ENCODE measurements at regions of chr5 and their contacts with region 1.

Region 1: DNA sequence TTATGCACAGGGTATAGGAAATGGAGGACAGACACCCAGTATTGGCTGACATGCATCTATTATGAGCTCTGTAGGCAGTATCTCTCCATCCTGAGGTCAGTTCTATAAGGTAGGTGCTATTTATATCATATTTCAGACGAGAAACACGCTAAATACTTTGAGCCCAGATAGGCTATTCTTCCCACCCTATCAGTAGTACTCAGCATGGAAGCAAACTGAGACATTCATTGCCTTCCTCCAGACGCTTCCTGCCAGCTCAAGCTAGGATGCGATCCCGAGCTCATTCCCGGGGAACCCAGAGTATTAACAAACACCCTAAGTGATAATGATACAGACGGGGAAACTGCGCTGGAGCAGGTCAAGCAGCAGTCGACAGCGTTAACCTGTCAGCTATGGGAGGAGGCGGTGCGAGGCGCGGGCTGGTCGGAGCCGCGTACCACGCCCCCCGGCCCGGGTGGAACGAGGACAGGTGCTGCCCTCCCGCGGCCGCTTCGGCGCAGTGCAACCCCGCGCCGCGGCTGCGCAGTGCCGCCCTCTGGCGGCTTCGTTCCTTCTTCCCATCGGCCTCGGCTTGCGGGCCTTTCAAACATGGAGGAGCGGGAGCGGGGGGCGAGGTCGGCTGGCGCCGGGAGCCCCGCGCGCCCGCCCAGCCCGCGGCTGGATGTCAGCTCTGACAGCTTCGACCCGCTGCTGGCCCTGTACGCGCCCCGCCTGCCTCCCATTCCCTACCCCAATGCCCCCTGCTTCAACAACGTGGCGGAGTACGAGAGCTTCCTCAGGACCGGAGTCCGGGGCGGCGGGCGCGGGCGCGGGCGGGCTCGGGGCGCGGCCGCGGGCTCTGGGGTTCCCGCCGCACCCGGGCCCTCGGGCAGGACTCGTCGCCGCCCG is at the start of gene LSM11:
- DNase-seq: peak; percentile 84
- H3K4me3 ChIP-seq: peak within 1 kb of the TSS; percentile 68 to 87 (median 80)
- H3K27ac ChIP-seq: peak within 1 kb of the TSS; percentile 51
- H3K4me1 ChIP-seq: peaks cover 11% of the 10 kb centered on the region
- H3K27me3 ChIP-seq: no peaks in the 10 kb centered on the region
- CTCF ChIP-seq: peak; percentile 92 to 99
- total RNA-seq, gene LSM11: 2.6 to 4.3 TPM

Region 2: GRCh38 chr5:157142317-157143126 is 600.9 kb before region 1 on chr5 and contains the start of gene MED7:
- CTCF ChIA-PET with region 1: no interaction called
- dilution Hi-C with region 1: no loop called
- in situ Hi-C with region 1: no loop called
- intact Hi-C with region 1: loop called (anchors 10 kb)
- DNase-seq: peak; percentile 97
- H3K4me3 ChIP-seq: peak within 1 kb of the TSS; percentile 72 to 98 (median 95)
- H3K27ac ChIP-seq: peak within 1 kb of the TSS; percentile 82
- H3K4me1 ChIP-seq: no peaks in the 10 kb centered on the region
- H3K27me3 ChIP-seq: no peaks in the 10 kb centered on the region
- CTCF ChIP-seq: no peak
- total RNA-seq, gene MED7: 9.5 to 10.2 TPM

Region 3: DNA sequence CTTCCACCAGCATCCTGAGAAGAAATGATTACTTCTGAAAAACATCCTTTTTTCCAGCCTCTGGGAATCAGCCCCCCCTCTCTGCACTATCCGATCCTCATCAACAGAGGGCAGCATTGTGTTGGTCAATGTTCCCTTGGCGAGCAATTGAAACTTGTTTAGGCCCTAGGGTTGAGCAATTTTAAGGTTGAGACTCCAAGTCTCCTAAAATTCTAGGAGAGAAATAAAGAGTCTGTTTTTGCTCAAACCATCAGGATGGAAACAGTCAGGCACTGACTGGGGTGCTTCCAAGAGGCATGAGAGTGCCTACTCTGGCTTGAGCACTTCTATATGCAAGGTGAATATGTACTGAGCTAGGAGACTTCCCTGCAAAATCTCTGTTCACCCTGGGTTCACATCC is 489.9 kb before region 1 on chr5:
- CTCF ChIA-PET with region 1: no interaction called
- dilution Hi-C with region 1: no loop called
- in situ Hi-C with region 1: no loop called
- intact Hi-C with region 1: loop called (anchors 5 kb)
- DNase-seq: peak; percentile 29
- H3K4me3 ChIP-seq: no peak overlapping the region
- H3K27ac ChIP-seq: no peak overlapping the region
- H3K4me1 ChIP-seq: no peaks in the 10 kb centered on the region
- H3K27me3 ChIP-seq: no peaks in the 10 kb centered on the region
- CTCF ChIP-seq: peak; percentile 85 to 94

Region 4: DNA sequence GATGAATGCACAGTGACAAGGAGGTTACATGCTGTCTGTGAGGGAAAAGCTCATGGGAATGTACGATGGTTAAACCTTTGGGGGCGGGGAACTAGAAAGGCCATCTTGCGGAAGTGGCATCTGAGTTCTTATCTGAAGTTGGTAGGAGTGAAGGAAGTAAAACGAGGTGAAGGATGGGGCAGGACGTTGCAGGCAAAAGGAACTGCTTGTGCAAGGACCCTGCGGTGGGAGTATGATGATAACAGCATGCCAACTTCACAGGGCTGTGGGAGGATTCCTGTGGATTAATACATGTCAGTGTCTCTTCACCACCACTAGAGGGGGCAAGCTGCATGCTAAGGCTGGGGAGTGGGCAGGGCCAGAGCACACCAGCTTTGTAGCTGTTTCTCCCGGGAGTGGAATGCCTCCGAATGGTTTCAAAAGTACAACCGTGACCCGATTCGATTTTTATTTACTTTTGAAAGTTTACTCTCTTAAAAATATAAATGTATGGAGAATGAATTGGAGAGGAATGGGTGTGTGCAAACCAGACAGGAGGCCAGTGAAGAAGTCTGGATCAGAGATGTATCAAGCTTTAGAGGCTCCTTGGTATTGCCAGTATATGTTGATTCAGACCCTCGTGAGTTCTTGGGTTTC is 415.0 kb before region 1 on chr5:
- CTCF ChIA-PET with region 1: no interaction called
- dilution Hi-C with region 1: no loop called
- in situ Hi-C with region 1: loop called (anchors 10 to 25 kb)
- intact Hi-C with region 1: loop called (anchors 1 kb)
- DNase-seq: peak; percentile 52
- H3K4me3 ChIP-seq: peak overlapping the region in 1 of 3 experiments; percentile 34
- H3K27ac ChIP-seq: no peak overlapping the region
- H3K4me1 ChIP-seq: no peaks in the 10 kb centered on the region
- H3K27me3 ChIP-seq: no peaks in the 10 kb centered on the region
- CTCF ChIP-seq: peak; percentile 97

Region 5: DNA sequence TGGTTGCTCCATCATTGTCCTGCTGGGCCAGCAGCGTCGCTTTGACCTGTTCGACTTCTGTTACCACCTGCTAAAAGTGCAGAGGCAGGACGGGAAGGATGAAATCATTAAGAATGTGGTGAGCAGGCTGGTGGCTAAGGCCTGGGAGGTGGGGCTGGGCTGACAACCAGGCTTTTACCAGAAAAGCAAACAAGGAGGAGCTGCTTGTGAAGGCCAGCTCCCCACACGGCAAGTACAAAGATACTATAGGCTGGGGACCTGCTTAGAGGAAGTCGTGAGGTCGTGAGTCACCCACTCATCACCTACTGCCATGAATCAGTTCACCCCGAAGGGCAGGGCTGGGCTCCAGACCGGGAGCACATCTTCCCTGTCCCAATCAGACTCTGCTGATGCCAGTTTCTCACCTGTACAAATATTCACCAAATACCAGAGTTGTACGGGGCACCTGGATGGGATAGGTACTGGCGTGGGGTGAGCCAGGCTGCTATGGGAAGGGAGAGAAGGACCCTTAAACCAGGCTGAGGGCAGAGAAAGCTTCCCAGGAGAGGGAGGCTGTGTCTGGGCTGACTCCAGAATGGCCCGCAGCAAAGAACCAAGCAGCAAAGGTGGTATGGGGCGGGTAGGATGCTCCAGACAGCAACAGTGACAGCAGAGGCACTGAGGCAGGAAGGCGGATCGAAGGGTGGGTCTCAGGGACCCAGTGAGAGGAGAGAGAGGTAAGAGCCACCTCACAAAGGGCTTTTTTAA is 352.7 kb before region 1 on chr5:
- CTCF ChIA-PET with region 1: interaction called, 4 read pairs
- dilution Hi-C with region 1: no loop called
- in situ Hi-C with region 1: no loop called
- intact Hi-C with region 1: loop called (anchors 5 kb)
- DNase-seq: peak; percentile 98
- H3K4me3 ChIP-seq: no peak overlapping the region
- H3K27ac ChIP-seq: peak overlapping the region; percentile 50
- H3K4me1 ChIP-seq: peaks cover 31% of the 10 kb centered on the region
- H3K27me3 ChIP-seq: no peaks in the 10 kb centered on the region
- CTCF ChIP-seq: no peak

Region 6: DNA sequence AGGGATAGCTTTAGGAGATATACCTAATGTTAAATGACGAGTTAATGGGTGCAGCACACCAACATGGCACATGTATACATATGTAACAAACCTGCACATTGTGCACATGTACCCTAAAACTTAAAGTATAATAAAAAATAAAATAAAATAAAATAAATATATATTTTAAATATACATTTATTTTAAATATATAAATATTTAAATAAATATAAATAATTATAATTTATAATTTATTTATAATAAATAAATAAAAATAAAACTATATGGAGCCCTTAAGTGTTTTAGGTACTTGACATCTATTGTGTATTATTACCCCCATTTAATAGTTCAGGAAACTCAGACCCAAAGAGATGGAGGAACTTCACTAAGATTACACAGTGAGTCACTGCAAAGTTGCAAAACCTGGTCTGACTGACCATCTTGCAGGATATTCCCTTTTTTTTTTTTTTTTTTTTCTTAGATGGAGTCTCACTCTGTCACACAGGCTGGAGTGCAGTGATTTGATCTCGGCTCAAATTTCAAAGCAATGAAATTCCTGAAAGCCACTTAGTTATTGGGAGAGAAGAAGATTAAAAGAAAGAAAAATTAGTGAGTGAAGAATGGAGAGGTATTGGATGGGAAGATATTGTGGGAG is 77.8 kb before region 1 on chr5:
- CTCF ChIA-PET with region 1: no interaction called
- dilution Hi-C with region 1: no loop called
- in situ Hi-C with region 1: loop called in 1 of 2 experiments (anchors 5 kb)
- intact Hi-C with region 1: loop called (anchors 1 kb)
- DNase-seq: peak; percentile 85
- H3K4me3 ChIP-seq: no peak overlapping the region
- H3K27ac ChIP-seq: no peak overlapping the region
- H3K4me1 ChIP-seq: peaks cover 6% of the 10 kb centered on the region
- H3K27me3 ChIP-seq: no peaks in the 10 kb centered on the region
- CTCF ChIP-seq: no peak